Activated naive CD4-positive, alpha-beta T cell treated with anti-CD3 and anti-CD28 coated beads, Interleukin-2, amount 10 ng/mL, durations not matched to agents 7 days and 5 days (primary cell): ENCODE measurements at regions of chr1 and their contacts with region 1.

Region 1: GRCh38 chr1:55478742-55479141 is 263.6 kb upstream of the USP24 start:
- DNase-seq: no peak
- H3K4me3 Mint-ChIP-seq: no peak overlapping the region
- H3K27ac Mint-ChIP-seq: no peak overlapping the region
- H3K4me1 Mint-ChIP-seq: no peaks in the 10 kb centered on the region
- H3K27me3 Mint-ChIP-seq: peaks cover 4% of the 10 kb centered on the region

Region 2: DNA sequence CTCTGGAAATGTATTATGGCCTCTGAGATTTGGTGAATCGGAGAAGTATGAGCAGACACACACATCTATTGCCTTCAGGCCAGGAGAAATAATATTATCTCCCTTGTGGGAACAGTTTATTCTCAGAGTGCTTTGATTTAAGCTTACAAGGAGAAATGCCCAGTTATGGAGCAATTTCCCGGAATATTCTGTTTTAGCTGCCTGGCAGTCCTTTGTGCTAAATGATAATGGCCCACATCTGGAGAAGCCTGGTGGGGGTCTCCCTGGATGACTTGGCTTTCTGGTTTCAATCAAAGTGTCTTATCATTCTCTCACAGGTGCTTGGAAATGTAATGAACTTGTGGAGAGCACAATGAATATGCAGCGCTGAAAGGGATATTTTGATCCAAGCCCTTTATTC is 126.0 kb after region 1 on chr1:
- CTCF ChIA-PET with region 1: no interaction called
- DNase-seq: no peak
- H3K4me3 Mint-ChIP-seq: no peak overlapping the region
- H3K27ac Mint-ChIP-seq: no peak overlapping the region
- H3K4me1 Mint-ChIP-seq: no peaks in the 10 kb centered on the region
- H3K27me3 Mint-ChIP-seq: no peaks in the 10 kb centered on the region

Region 3: DNA sequence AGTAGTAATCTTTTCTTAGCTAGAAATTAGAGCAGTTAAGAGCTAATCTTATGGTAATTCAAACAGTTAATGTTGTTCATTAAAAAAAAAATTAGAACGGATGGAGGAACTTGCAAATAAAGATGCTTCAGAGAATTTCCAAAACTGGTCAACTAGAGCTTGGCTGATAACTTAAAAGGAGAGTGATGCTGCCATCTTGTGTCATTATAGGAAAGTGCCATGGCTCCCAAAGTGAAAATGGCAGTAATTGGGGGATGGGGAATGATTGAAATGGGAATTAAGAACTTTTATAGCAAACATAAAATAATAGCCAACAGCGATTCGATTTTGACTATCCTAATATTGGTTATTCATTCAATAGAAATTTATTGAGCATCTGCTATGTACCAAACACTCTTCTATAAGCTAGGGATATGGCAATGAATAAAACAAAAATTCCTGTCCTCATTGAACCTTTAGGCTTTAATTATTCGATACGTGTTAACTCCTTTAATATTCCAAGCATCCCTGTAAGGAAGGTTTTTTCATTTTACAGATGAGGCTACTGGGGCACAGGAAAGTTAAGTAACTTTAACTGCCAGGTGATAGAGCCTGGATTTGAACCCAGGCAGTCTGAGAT is 1106.3 kb after region 1 on chr1:
- CTCF ChIA-PET with region 1: interaction called, 11 read pairs
- DNase-seq: no peak
- H3K4me3 Mint-ChIP-seq: no peak overlapping the region
- H3K27ac Mint-ChIP-seq: no peak overlapping the region
- H3K4me1 Mint-ChIP-seq: no peaks in the 10 kb centered on the region
- H3K27me3 Mint-ChIP-seq: peaks cover 15% of the 10 kb centered on the region